GM12878 (cell line): ENCODE measurements at regions of chr1 and their contacts with region 1.

Region 1: GRCh38 chr1:204506961-204507387 is 9.2 kb upstream of the MDM4 start:
- DNase-seq: peak; percentile 97
- ATAC-seq: peak; percentile 83
- H3K4me3 ChIP-seq: peak overlapping the region; percentile 77
- H3K27ac ChIP-seq: peak overlapping the region; percentile 59
- H3K4me1 ChIP-seq: peaks cover 4% of the 10 kb centered on the region
- H3K27me3 ChIP-seq: no peaks in the 10 kb centered on the region
- CTCF ChIP-seq: no peak
- EP300 ChIP-seq: peak in 1 of 2 experiments; percentile 29; a peak in 1 of 4 replicates
- POLR2A ChIP-seq: peak; percentile 42; the same call in 1 of the 2 replicates
- RAD21 ChIP-seq: no peak

Region 2: DNA sequence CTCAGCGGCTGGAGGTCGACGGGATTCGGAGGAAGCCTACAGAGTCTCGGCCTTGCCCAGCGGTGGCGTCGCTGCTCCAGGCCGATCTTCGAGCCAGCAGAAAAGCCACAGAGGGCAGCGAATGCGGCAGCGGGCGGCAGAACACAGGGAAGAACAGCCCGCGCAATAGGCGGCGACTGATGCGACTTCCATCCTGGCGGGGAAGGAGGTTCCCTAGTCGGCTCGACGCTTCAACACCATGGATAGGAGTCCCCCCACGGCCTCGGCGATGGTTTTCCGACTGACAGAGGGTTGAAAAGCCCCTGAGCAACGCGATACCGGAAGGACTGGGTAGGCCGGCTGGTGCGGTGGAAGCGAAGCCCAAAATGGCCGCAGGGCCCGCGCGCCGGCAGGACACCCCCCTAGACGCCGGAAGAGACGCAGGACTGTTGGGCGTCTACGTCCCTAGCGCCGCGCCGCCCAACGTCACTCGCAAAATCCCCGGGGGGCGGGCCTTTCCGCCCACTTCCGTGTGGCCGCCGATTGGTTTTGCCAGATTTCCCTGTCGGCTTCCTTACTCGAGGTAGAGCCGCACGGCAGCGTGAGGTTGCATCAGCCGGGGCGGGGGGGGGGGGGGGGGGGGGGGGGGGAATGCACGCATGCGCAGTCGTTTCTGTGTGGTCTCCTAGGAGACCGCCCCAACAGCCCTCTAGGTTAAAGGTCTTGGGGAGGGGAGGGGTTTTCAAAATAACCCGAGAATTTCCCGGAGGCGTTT is 95.3 kb before region 1 on chr1 and contains the start of gene PPP1R15B:
- CTCF ChIA-PET with region 1: interaction called, 2,021 read pairs
- POLR2A ChIA-PET with region 1: interaction called, 5 read pairs
- RAD21 ChIA-PET with region 1: interaction called, 12 read pairs
- SMC1A ChIA-PET with region 1: interaction called, 11 read pairs
- in situ Hi-C with region 1: no loop called
- intact Hi-C with region 1: no loop called
- DNase-seq: peak; percentile 98
- ATAC-seq: peak; percentile 94
- H3K4me3 ChIP-seq: peak within 1 kb of the TSS; percentile 87
- H3K27ac ChIP-seq: peak within 1 kb of the TSS; percentile 99
- H3K4me1 ChIP-seq: no peaks in the 10 kb centered on the region
- H3K27me3 ChIP-seq: no peaks in the 10 kb centered on the region
- CTCF ChIP-seq: no peak
- EP300 ChIP-seq: 0 out of 4 replicates have a peak, but pooled peaks of 1 of the 2 experiments have one; percentile 29
- POLR2A ChIP-seq: peak; percentile 96
- RAD21 ChIP-seq: no peak
- polyA plus RNA-seq, gene PPP1R15B: 13.9 to 17.1 TPM

Region 3: GRCh38 chr1:204446370-204447111 is 60.4 kb before region 1 on chr1:
- CTCF ChIA-PET with region 1: interaction called, 2,021 read pairs
- POLR2A ChIA-PET with region 1: interaction called, 12 read pairs
- RAD21 ChIA-PET with region 1: interaction called, 441 read pairs
- SMC1A ChIA-PET with region 1: interaction called, 939 read pairs
- in situ Hi-C with region 1: loop called (anchors 5 kb)
- intact Hi-C with region 1: loop called (anchors 1 kb)
- DNase-seq: no peak
- ATAC-seq: peak; percentile 98
- H3K4me3 ChIP-seq: no peak overlapping the region
- H3K27ac ChIP-seq: no peak overlapping the region
- H3K4me1 ChIP-seq: peaks cover 5% of the 10 kb centered on the region
- H3K27me3 ChIP-seq: no peaks in the 10 kb centered on the region
- CTCF ChIP-seq: peak; percentile 80 to 92 (median 89); a peak in 5 of 6 replicates
- EP300 ChIP-seq: no peak
- POLR2A ChIP-seq: no peak
- RAD21 ChIP-seq: peak; percentile 99

Region 4: GRCh38 chr1:204465546-204466415 is 41.2 kb before region 1 on chr1:
- CTCF ChIA-PET with region 1: interaction called, 2,021 read pairs
- POLR2A ChIA-PET with region 1: interaction called, 3 read pairs
- RAD21 ChIA-PET with region 1: interaction called, 10 read pairs
- SMC1A ChIA-PET with region 1: interaction called, 15 read pairs
- in situ Hi-C with region 1: no loop called
- intact Hi-C with region 1: no loop called
- DNase-seq: peak; percentile 63
- ATAC-seq: peak; percentile 84
- H3K4me3 ChIP-seq: no peak overlapping the region
- H3K27ac ChIP-seq: peak overlapping the region; percentile 88
- H3K4me1 ChIP-seq: peaks cover 60% of the 10 kb centered on the region
- H3K27me3 ChIP-seq: no peaks in the 10 kb centered on the region
- CTCF ChIP-seq: 0 out of 6 replicates have a peak, but pooled peaks of 1 of the 3 experiments have one; percentile 3
- EP300 ChIP-seq: no peak
- POLR2A ChIP-seq: 0 out of 2 replicates have a peak, but pooled peaks have one; percentile 16
- RAD21 ChIP-seq: no peak

Region 5: GRCh38 chr1:204494281-204495077 is 12.5 kb before region 1 on chr1 and contains the start of gene PIK3C2B:
- CTCF ChIA-PET with region 1: interaction called, 471 read pairs
- POLR2A ChIA-PET with region 1: interaction called, 50 read pairs
- RAD21 ChIA-PET with region 1: interaction called, 57 read pairs
- SMC1A ChIA-PET with region 1: interaction called, 408 read pairs
- in situ Hi-C with region 1: no loop called
- intact Hi-C with region 1: no loop called
- DNase-seq: peak; percentile 55
- ATAC-seq: peak; percentile 92
- H3K4me3 ChIP-seq: peak within 1 kb of the TSS; percentile 92
- H3K27ac ChIP-seq: peak within 1 kb of the TSS; percentile 86
- H3K4me1 ChIP-seq: peaks cover 22% of the 10 kb centered on the region
- H3K27me3 ChIP-seq: no peaks in the 10 kb centered on the region
- CTCF ChIP-seq: peak; percentile 37 to 59 (median 43)
- EP300 ChIP-seq: no peak
- POLR2A ChIP-seq: peak; percentile 86
- RAD21 ChIP-seq: peak; percentile 47
- polyA plus RNA-seq, gene PIK3C2B: 2.2 to 5.0 TPM

Region 6: DNA sequence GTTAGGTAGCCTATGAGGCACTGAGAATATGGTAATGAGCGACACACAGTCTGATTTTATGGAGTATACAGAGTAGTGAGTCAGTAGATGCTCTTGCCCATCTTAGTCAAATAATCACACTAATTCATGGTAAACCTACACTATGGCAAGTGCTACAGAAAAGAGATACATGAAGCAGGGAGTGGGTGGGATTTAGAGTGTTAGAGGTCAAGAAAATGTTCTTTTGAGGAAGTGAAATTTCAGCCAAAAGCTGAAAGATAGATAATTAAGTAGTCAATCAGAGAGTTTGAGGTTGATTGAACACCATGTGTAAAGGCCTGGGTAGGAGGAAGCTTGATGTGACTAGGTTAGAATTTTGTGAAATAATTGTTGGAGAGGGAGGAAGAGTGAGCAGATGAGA is 24.0 kb after region 1 on chr1:
- CTCF ChIA-PET with region 1: interaction called, 5 read pairs
- POLR2A ChIA-PET with region 1: interaction called, 10 read pairs
- RAD21 ChIA-PET with region 1: interaction called, 27 read pairs
- SMC1A ChIA-PET with region 1: interaction called, 41 read pairs
- in situ Hi-C with region 1: no loop called
- intact Hi-C with region 1: no loop called
- DNase-seq: peak; percentile 87
- ATAC-seq: peak; percentile 96
- H3K4me3 ChIP-seq: no peak overlapping the region
- H3K27ac ChIP-seq: peak overlapping the region; percentile 59
- H3K4me1 ChIP-seq: peaks cover 23% of the 10 kb centered on the region
- H3K27me3 ChIP-seq: no peaks in the 10 kb centered on the region
- CTCF ChIP-seq: no peak
- EP300 ChIP-seq: peak in 1 of 2 experiments; percentile 94; a peak in 2 of 4 replicates
- POLR2A ChIP-seq: no peak
- RAD21 ChIP-seq: no peak